ENCODE measurements at regions of chr12 and their contacts with region 1.

Region 1: GRCh38 chr12:123591702-123592481 is 7.5 kb downstream of the TMED2 start:
- DNase-seq: no peak
- CTCF ChIP-seq: no peak

Region 2: DNA sequence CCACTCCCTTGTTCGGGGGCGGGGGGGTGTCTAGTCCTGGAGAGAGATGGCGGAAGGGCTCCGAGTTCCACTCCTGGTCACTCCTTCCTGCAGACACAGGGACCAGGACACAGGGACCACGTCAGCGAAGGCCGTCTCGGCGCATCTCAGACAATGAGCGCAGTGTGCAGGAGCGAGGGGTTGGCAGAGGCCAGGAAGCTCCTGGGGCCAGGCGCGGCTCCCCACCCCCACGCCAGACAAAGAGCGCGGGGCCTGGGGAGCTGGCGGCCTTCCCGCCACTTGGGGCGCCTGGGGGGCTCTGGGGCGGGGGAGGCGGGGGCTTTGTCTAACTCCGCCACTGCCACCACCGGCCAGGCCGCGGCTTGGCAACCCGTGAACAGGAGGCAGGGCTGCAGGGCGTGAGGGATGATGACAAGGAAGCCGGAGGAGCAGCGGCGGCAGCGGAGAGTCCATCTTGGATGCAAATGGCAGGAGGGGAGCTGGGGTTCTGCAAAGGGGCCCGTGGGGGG is 322.5 kb before region 1 on chr12:
- in situ Hi-C with region 1: loop called (anchors 10 kb)
- DNase-seq: peak; percentile 58
- CTCF ChIP-seq: no peak